ENCODE measurements at regions of chr2 and their contacts with region 1.

Region 1: DNA sequence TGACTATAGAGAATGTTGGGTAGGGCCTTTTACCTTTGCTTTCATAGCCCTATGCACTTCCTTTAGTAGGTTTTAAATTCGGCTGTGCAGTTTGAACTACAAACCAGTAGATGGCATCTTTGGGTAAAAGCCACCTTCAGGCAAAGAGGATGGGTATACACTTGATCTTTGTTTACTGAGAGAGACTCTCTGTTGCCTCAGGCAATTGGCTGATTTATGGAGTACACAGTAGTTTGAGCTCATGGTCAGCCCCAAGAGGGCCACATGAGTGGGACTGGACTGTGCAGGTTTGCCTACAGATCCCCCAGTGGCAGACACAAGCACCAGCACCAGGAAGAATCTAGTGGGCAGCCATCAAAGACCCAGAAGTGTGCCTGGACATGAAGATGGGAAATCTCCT is 1304.3 kb upstream of the DDX18 start:
- DNase-seq: no peak
- ATAC-seq: no peak
- H3K4me3 ChIP-seq: no peak overlapping the region
- H3K27ac ChIP-seq: no peak overlapping the region
- H3K4me1 ChIP-seq: no peaks in the 10 kb centered on the region
- H3K27me3 ChIP-seq: no peaks in the 10 kb centered on the region
- CTCF ChIP-seq: peak in 1 of 12 donors; percentile 9
- POLR2A ChIP-seq: no peak

Region 2: GRCh38 chr2:116537811-116538210 is 27.7 kb after region 1 on chr2:
- intact Hi-C with region 1: no loop called
- DNase-seq: no peak
- ATAC-seq: no peak
- H3K4me3 ChIP-seq: no peak overlapping the region
- H3K27ac ChIP-seq: no peak overlapping the region
- H3K4me1 ChIP-seq: no peaks in the 10 kb centered on the region
- H3K27me3 ChIP-seq: no peaks in the 10 kb centered on the region
- CTCF ChIP-seq: no peak
- POLR2A ChIP-seq: no peak

Region 3: GRCh38 chr2:117771969-117772630 is 1261.9 kb after region 1 on chr2:
- intact Hi-C with region 1: loop called in 1 of 10 experiments (anchors 10 kb)
- DNase-seq: no peak
- ATAC-seq: no peak
- H3K4me3 ChIP-seq: no peak overlapping the region
- H3K27ac ChIP-seq: no peak overlapping the region
- H3K4me1 ChIP-seq: no peaks in the 10 kb centered on the region
- H3K27me3 ChIP-seq: peaks cover 0 to 8% (median 0%) of the 10 kb centered on the region in 9 donors
- CTCF ChIP-seq: peak in 7 of 12 donors; percentile 15 to 51 (median 40)
- POLR2A ChIP-seq: no peak

Measured in heart left ventricle (tissue), 16 donors.